Heart right ventricle (tissue), 16 donors: ENCODE measurements at regions of chr9 and their contacts with region 1.

Region 1: GRCh38 chr9:14478175-14479162 is 164.5 kb upstream of the NFIB start:
- DNase-seq: no peak
- ATAC-seq: no peak
- H3K4me3 ChIP-seq: no peak overlapping the region
- H3K27ac ChIP-seq: no peak overlapping the region
- H3K4me1 ChIP-seq: no peaks in the 10 kb centered on the region
- H3K27me3 ChIP-seq: no peaks in the 10 kb centered on the region
- CTCF ChIP-seq: no peak

Region 2: DNA sequence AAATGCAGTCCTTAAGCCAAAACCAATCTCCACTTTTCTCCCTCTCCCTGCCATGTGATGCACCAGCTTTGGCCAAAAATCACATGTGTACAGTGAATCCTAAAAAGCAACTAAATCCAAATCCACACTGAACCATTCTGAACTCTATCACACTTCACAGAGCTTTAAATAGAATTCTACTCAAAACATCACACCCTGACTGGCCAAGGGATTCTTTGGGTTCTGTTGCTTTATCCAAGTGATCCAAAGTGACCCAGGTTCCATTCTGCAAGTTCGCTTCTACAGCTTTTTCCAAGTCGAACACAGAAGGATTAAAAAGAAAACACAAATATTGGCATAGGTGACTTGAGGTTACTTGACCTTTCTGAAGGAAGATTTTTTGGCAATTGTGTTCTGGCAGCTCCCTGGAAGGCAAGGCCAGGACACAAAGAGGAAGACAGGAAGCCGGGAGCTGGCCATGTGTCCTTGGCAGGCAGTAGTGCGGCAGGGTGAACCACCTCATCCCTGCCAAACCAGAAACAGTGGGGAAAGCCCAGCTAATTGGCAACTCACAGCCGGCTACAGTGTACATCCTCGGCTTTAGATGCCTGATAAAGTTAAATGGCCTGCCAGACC is 279.5 kb before region 1 on chr9:
- intact Hi-C with region 1: no loop called
- DNase-seq: peak; percentile 63 to 75
- ATAC-seq: peak; percentile 72 to 91 (median 87)
- H3K4me3 ChIP-seq: peak overlapping the region in 4 of 10 donors; percentile 4 to 8 (median 7)
- H3K27ac ChIP-seq: peak overlapping the region; percentile 10 to 85 (median 71)
- H3K4me1 ChIP-seq: peaks cover 8 to 100% (median 82%) of the 10 kb centered on the region in 9 donors
- H3K27me3 ChIP-seq: no peaks in the 10 kb centered on the region
- CTCF ChIP-seq: no peak

Region 3: GRCh38 chr9:14627513-14627912 is 149.0 kb after region 1 on chr9:
- intact Hi-C with region 1: loop called in 1 of 10 experiments (anchors 10 kb)
- DNase-seq: no peak
- ATAC-seq: peak in 1 of 8 donors; percentile 24
- H3K4me3 ChIP-seq: no peak overlapping the region
- H3K27ac ChIP-seq: no peak overlapping the region
- H3K4me1 ChIP-seq: peaks cover 0 to 7% (median 0%) of the 10 kb centered on the region in 9 donors
- H3K27me3 ChIP-seq: no peaks in the 10 kb centered on the region
- CTCF ChIP-seq: no peak

Region 4: DNA sequence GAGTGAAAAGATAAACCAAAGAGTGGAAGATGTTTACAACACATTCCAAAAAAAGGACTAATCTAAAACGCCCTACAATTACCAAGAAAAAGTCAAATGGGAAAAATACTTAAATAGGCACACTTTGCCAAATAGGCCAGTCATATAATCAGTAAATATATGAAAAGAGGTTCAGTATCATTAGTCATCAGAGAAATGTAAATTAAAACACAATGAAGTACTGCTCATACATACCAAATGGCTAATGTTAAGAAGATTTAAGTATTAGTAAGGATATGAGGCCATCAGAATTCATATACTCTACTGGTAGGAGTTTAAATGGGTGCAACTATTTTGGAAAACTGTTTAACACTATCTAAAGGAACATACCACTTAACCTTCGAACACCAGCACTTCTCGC is 167.2 kb after region 1 on chr9:
- intact Hi-C with region 1: loop called in 1 of 10 experiments (anchors 10 kb)
- DNase-seq: no peak
- ATAC-seq: no peak
- H3K4me3 ChIP-seq: no peak overlapping the region
- H3K27ac ChIP-seq: no peak overlapping the region
- H3K4me1 ChIP-seq: no peaks in the 10 kb centered on the region
- H3K27me3 ChIP-seq: no peaks in the 10 kb centered on the region
- CTCF ChIP-seq: no peak